ENCODE measurements at regions of chr17 and their contacts with region 1.

Region 1: GRCh38 chr17:43393944-43394482 is 4.8 kb upstream of the ARL4D start:
- DNase-seq: peak; percentile 89 to 95 (median 92)
- H3K4me3 ChIP-seq: peak overlapping the region in 2 of 3 donors; percentile 14 to 35
- H3K27ac ChIP-seq: peak overlapping the region in 1 of 2 donors; percentile 52
- H3K4me1 ChIP-seq: peaks cover 0 to 11% (median 2%) of the 10 kb centered on the region in 3 donors
- H3K27me3 ChIP-seq: no peaks in the 10 kb centered on the region
- CTCF ChIP-seq: peak; percentile 99

Region 2: DNA sequence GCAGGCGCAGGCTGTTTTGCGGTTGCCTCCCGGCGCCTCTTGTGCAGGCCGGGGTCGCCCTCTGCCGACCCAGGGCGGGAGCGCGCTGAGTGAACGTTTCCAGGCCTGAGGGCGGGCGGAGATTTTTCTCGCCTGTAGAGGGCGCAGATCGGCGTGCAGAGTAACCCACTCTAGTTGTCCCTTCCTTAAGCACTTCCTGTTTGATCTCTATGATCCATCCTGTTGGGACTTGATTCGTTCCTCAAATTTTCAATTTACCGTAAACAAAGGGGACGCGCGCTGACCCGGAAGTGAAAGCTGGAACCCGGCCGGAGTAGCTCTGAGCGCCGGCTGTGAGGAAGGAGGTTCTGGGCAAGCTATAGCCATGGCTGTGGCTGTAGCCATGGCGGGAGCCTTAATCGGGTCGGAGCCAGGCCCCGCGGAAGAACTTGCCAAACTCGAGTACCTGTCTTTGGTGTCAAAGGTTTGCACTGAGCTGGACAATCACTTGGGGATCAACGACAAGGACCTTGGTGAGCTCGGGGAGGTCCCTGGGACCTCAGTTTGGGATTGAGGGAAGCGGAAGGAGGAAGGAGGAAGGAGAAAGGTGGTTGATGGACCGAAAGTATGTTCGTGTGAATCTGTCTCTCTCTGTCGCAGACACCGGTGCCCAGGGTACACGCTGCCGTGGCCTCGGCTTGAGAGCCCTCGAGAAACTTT is 89.8 kb after region 1 on chr17 and contains the start of gene DHX8:
- intact Hi-C with region 1: loop called (anchors 2 kb)
- DNase-seq: peak; percentile 98 to 99 (median 99)
- H3K4me3 ChIP-seq: peak within 1 kb of the TSS; percentile 98 to 100 (median 98)
- H3K27ac ChIP-seq: peak within 1 kb of the TSS; percentile 67 to 89
- H3K4me1 ChIP-seq: peaks cover 0 to 6% (median 3%) of the 10 kb centered on the region in 3 donors
- H3K27me3 ChIP-seq: no peaks in the 10 kb centered on the region
- CTCF ChIP-seq: peak; percentile 100
- total RNA-seq, gene DHX8: 53.9 TPM

Measured in kidney (tissue), 22 donors.